ENCODE measurements at regions of chr12 and their contacts with region 1.

Region 1: GRCh38 chr12:65977384-65977783 is 153.1 kb downstream of the HMGA2 start:
- DNase-seq: no peak
- ATAC-seq: no peak

Region 2: GRCh38 chr12:65372574-65372973 is 604.8 kb before region 1 on chr12:
- intact Hi-C with region 1: no loop called
- DNase-seq: no peak
- ATAC-seq: no peak

Region 3: DNA sequence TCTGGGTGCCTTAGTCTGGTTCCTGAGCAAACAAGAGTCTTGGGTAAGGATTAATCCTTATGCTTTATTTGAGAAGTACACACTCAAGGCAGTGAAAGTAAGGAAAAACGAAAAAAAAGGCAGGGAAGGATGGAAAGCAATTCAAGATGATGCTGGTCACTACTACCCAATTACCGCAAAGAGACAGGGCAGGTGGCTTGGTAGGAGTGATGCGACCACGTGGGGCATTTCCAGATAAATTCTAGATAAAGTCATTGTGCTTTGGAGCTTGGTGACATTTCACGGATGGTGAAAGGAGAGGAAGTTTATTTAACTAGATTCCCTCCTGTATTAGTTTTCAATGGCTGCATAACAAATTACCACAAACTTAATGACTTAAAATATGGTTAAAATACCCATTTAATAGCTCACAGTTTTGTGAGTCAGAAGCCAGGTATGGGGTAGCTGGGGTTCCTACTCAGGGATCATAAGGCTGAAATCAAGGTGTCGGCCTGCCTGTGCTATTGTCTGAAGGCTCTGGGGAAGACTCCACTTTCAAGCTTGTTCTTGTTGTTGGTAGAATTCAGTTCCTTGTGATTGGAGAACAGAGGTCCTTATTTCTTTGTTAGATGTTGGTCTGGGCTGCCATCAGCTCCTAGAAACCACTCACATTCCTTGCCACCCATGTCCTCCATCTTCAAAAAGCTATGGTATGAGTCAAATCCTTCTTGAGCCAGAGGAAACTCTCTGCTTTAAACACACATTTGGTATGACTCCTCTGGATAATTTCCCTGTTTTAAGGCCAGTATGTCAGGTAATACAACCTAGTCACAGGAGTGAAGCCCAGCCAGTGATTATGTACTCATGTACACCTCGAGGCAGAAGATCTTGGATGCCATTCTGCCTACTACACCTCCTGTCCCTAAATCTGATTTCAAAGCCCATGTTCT is 158.7 kb before region 1 on chr12:
- intact Hi-C with region 1: loop called in 1 of 2 experiments (anchors 10 kb)
- DNase-seq: no peak
- ATAC-seq: no peak

Region 4: GRCh38 chr12:65858831-65859230 is 118.6 kb before region 1 on chr12:
- intact Hi-C with region 1: no loop called
- DNase-seq: no peak
- ATAC-seq: no peak

Measured in left cardiac atrium (tissue), 4 donors.